Transverse colon (tissue), 4 donors: ENCODE measurements at regions of chr16 and their contacts with region 1.

Region 1: DNA sequence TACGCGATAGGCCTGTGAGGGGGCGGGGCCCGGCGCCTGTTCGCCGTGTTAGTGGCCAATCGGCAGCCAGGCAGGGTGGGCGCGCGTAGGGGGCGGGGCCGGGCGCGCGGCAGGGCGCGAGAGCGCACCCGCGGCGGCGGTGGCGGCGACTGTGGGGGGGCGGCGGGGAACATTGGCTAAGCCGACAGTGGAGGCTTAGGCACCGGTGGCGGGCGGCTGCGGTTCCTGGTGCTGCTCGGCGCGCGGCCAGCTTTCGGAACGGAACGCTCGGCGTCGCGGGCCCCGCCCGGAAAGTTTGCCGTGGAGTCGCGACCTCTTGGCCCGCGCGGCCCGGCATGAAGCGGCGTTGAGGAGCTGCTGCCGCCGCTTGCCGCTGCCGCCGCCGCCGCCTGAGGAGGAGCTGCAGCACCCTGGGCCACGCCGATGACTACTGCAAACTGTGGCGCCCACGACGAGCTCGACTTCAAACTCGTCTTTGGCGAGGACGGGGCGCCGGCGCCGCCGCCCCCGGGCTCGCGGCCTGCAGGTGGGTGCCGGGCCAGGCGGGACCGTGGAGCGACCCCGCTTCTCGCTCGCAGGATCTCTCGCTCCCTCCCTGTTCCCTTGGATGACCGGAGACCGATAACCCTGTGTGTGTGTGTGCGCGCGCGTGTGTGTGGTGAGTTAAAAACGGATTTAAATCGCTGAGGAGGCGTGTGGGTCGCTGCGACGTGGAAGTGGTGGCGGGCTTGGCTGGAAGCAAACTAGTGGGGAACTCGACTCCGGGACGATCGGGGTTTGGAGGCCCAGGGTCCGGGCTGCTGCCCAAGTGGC is at the start of gene NFATC3:
- DNase-seq: peak; percentile 99
- H3K4me3 ChIP-seq: peak within 1 kb of the TSS; percentile 76 to 96 (median 83)
- H3K27ac ChIP-seq: peak within 1 kb of the TSS; percentile 98 to 100 (median 99)
- H3K4me1 ChIP-seq: peaks cover 19 to 72% (median 41%) of the 10 kb centered on the region in 4 donors
- H3K27me3 ChIP-seq: no peaks in the 10 kb centered on the region
- CTCF ChIP-seq: peak in 1 of 5 experiments; percentile 13
- EP300 ChIP-seq: no peak
- POLR2A ChIP-seq: peak; percentile 58
- total RNA-seq, gene NFATC3: 27.5 to 107 (median 41.6) TPM

Region 2: GRCh38 chr16:67897231-67897630 is 188.2 kb before region 1 on chr16:
- in situ Hi-C with region 1: no loop called
- intact Hi-C with region 1: no loop called
- DNase-seq: no peak
- H3K4me3 ChIP-seq: no peak overlapping the region
- H3K27ac ChIP-seq: peak overlapping the region in 1 of 4 donors; percentile 8
- H3K4me1 ChIP-seq: peaks cover 8 to 60% (median 37%) of the 10 kb centered on the region in 4 donors
- H3K27me3 ChIP-seq: no peaks in the 10 kb centered on the region
- CTCF ChIP-seq: no peak
- EP300 ChIP-seq: no peak
- POLR2A ChIP-seq: no peak

Region 3: DNA sequence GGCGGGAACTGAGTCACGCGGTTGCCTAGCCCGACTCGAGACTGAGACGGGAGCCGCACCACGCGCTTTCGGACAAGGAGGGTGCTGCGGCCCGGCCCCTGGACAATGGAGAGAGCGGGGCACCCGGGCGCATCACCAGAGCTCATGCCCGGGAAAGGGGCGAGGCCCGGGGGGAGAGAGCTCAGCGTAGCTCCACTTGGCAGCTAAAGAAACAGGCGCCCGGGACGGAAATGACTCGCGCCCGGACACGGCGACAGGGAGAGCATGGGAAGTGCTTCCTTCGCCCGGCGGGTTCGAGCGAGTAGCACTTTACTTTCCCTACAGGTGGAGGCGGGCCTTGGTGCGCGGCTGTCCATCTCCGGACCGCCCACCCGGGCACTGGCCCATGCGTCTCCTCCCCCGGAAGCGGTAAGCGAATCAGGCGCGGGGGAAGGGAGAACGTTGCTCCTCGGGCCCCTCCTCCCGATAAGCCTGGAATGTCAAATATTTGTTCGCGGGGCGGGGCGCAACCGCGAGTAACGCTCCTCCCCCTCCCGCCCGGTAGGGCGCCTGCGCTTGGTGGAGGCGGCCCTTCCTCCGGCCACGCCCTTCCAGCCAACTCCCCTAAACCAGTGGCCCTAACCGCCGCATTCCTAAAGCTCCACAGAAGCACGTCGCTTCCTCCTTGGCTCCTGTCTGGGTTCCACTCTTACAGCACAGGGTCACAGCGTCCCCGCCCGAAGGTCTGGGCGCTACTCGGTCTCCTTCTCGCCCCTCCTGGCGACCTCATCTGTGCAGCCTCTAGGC is 152.0 kb after region 1 on chr16:
- in situ Hi-C with region 1: loop called in 1 of 4 experiments (anchors 25 kb)
- intact Hi-C with region 1: loop called (anchors 10 kb)
- DNase-seq: peak; percentile 99
- H3K4me3 ChIP-seq: peak overlapping the region; percentile 33 to 62 (median 48)
- H3K27ac ChIP-seq: peak overlapping the region; percentile 91 to 94 (median 92)
- H3K4me1 ChIP-seq: peaks cover 11 to 56% (median 39%) of the 10 kb centered on the region in 4 donors
- H3K27me3 ChIP-seq: no peaks in the 10 kb centered on the region
- CTCF ChIP-seq: no peak
- EP300 ChIP-seq: peak; percentile 94
- POLR2A ChIP-seq: peak; percentile 99

Region 4: DNA sequence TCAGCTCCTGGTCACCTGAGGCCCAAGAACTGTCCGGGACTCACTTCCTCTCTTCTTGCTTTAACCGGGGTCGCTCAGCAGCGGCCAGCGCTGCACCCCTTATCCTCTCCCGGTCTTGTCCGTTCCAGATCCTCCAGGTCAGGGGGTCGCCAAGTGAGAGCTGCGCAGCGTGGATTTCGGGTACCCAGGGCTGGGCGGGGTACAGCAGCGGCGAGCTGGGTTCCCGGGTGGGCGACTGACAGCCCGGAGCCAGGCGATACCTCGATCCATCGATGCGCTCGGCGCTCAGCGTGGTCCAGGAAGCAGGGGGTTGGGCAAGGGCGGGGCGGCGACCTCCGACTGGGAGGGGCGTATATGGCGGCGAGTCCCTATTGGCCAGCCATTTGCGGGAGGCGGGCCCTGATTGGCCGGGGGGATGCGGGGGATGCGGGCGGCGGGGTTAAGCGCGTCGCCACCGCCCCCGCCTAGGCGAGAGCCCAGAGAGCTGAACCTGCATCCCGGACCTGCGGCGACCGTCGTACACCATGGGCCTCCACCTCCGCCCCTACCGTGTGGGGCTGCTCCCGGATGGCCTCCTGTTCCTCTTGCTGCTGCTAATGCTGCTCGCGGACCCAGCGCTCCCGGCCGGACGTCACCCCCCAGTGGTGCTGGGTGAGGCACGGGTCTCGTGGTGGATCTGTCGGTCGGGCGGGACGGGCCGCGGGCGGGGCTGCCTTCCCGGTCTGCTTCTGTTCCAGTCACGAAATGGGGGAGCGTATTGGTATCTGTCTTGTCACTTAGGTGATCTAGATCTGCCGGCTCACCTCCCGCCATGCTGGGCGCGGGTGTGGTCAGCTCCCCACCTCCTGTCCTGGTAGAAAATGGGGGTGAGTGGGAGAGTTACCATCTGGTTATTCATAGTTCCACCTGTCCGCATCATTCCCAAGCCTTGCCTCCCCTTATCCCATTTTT is 159.7 kb after region 1 on chr16 and contains the start of gene PLA2G15:
- in situ Hi-C with region 1: loop called in 1 of 4 experiments (anchors 25 kb)
- intact Hi-C with region 1: no loop called
- DNase-seq: peak; percentile 98
- H3K4me3 ChIP-seq: peak within 1 kb of the TSS; percentile 67 to 84 (median 68)
- H3K27ac ChIP-seq: peak within 1 kb of the TSS; percentile 61 to 79 (median 76)
- H3K4me1 ChIP-seq: peaks cover 18 to 30% (median 21%) of the 10 kb centered on the region in 4 donors
- H3K27me3 ChIP-seq: no peaks in the 10 kb centered on the region
- CTCF ChIP-seq: no peak
- EP300 ChIP-seq: no peak
- POLR2A ChIP-seq: peak; percentile 64
- total RNA-seq, gene PLA2G15: 9.6 to 18.2 (median 15.0) TPM